A549 (cell line): ENCODE measurements at regions of chr10 and their contacts with region 1.

Region 1: DNA sequence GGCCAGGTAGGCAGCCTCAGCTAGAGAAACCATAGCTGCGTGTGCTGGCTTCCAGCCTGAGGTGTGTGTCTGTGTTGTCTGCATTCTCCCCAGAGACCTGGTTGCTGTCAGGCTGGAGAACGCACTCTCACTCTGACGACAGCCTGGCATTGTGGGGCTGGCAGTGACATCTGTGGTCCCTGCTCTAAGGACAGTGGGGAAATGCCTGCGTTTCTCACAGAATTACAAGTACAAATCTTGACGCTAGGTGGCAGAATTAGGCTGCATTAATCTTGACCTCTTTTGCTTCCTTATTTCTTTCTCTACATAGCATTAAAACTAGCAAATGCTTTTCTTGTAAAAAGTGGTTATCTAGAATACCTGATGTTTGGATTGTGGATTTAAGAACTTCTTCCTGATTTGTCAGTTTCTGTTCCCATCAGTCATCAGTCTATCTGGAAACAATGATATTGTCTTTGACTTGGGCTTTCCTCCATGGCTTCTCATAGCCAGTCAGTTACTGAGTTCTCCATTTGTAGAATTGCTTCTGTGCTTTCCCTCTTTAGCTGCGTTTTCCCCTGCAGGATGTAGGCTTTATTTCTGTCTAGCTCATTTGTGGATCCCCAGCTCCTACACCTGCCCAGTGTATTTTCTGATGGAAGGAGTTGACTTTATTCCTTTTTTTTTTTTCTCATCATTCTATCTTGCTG is 86.0 kb downstream of the FANK1 start:
- DNase-seq: peak; percentile 35 to 69
- ATAC-seq: peak; percentile 78 to 87; a peak in 5 of 6 replicates
- H3K4me3 ChIP-seq: no peak overlapping the region
- H3K27ac ChIP-seq: peak overlapping the region; percentile 23 to 67; a peak in 4 of 6 replicates
- H3K4me1 ChIP-seq: peaks cover 27% of the 10 kb centered on the region; the same call in 2 of the 3 replicates
- CTCF ChIP-seq: peak; percentile 82
- EP300 ChIP-seq: no peak
- POLR2A ChIP-seq: no peak
- RAD21 ChIP-seq: peak; percentile 87 to 94

Region 2: DNA sequence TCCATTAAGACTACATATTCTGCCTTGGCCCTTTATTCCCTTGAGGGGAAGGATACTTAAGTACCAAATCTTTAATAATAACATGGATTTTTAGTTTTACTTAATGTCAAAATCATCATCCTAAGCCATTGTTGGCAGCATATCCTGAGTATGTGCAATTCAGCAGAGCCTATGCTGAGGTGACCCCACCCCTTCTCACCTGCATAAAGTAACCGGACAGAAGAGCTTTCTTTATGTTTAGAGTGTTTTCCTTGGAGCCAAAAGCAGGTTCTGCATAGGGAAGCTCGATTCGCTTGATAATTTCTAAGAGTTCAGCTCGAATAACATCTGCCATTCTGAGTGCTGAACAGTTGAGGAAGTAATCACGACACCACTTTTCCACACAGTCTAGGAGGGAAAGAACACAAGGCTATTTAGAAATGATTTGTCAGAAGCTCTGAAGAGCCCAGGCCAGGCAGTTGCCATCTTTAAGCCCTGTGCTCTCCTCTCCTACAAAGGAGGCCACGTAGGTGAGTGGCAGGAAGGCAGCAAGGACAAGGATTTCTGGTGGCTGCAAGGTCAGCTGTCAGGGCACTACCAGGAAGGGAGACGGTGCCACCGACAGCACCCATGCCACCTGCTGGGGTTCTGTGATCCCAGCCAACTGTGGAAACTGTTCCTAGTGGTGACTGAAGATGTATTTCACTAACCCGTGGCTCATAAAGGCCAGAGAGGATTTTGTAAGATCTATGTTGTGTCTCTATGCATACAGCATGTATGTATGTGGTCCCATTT is 143.4 kb before region 1 on chr10:
- CTCF ChIA-PET with region 1: no interaction called
- POLR2A ChIA-PET with region 1: no interaction called
- DNase-seq: no peak
- ATAC-seq: no peak; a peak in 2 of 6 replicates
- H3K4me3 ChIP-seq: no peak overlapping the region
- H3K27ac ChIP-seq: no peak overlapping the region
- H3K4me1 ChIP-seq: peaks cover 20% of the 10 kb centered on the region
- CTCF ChIP-seq: no peak
- EP300 ChIP-seq: no peak
- POLR2A ChIP-seq: no peak
- RAD21 ChIP-seq: no peak

Region 3: DNA sequence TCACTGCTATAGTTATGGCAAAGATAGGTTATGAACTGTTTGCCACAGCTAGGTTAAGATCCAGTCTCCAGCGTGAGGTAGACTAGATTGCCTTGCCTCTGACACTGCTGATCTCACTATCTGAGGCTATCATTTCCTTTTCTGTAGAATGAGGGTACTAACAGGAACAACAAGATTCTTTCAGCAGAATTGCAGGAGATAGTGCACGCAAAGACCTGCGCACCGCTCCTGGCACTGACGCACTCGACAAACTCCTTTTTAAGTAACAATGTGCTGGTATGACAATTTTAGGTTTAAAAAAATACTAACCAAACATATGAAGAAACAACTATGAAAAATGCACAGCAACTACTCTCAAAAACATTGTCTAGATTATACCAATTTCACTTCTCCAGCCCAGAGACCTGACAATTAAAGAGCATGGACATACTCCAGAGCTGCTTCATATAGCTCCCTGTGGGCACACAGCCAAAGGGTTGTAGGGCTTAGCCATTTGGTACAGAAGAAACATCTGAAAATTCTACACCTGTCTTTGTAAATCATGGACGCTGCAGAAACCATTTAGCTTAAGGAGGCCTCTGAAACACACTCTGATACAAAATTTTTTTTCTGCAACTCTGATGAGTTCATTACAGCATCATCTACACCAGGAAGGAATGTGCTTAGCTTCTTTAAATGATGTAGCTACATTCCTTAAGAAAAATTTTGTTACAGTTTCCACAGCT is 398.1 kb after region 1 on chr10:
- CTCF ChIA-PET with region 1: interaction called, 11 read pairs
- POLR2A ChIA-PET with region 1: no interaction called
- DNase-seq: no peak
- ATAC-seq: no peak
- H3K4me3 ChIP-seq: no peak overlapping the region
- H3K27ac ChIP-seq: no peak overlapping the region
- H3K4me1 ChIP-seq: no peaks in the 10 kb centered on the region
- CTCF ChIP-seq: no peak
- EP300 ChIP-seq: no peak
- POLR2A ChIP-seq: no peak
- RAD21 ChIP-seq: no peak

Region 4: GRCh38 chr10:126387023-126387921 is 404.9 kb after region 1 on chr10:
- CTCF ChIA-PET with region 1: interaction called, 41 read pairs
- POLR2A ChIA-PET with region 1: no interaction called
- DNase-seq: peak; percentile 66 to 70
- ATAC-seq: peak; percentile 85 to 90
- H3K4me3 ChIP-seq: peak overlapping the region; percentile 61
- H3K27ac ChIP-seq: peak overlapping the region; percentile 63 to 93
- H3K4me1 ChIP-seq: no peaks in the 10 kb centered on the region
- CTCF ChIP-seq: peak; percentile 70
- EP300 ChIP-seq: no peak
- POLR2A ChIP-seq: no peak
- RAD21 ChIP-seq: peak; percentile 84 to 94

Region 5: DNA sequence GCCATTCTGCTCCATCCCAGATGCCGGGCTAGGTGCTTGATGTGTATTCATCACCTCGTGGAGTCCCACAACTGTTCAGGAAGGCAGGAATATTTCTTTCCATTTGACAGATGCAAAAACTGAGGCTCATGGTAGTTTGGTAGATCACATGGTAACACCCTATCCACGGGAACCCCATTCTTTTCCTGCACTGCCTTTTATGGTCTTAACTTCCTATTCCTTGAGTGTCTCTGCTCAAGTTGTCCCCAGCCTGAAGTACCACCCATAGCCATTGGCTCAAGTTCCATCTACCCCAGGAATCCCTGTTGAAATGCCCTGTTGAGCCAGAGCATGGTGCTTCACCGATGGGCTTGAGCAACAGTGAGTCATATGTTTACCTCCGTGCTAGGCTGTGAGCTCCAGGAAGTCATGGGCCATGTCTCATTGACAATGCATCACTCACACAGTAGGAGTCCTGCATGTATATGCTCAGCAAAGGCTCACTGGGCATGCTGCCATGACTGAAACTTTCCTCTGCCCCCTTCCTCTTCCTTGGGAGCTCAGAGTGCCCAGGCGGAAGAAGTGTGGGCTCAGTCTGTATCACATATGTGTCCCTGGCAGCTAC is 477.6 kb after region 1 on chr10:
- CTCF ChIA-PET with region 1: interaction called, 14 read pairs
- POLR2A ChIA-PET with region 1: no interaction called
- DNase-seq: peak; percentile 90 to 96
- ATAC-seq: peak; percentile 94 to 96
- H3K4me3 ChIP-seq: no peak overlapping the region
- H3K27ac ChIP-seq: peak overlapping the region; percentile 88 to 91
- H3K4me1 ChIP-seq: peaks cover 36% of the 10 kb centered on the region
- CTCF ChIP-seq: no peak
- EP300 ChIP-seq: peak; percentile 54 to 87; a peak in 3 of 5 replicates
- POLR2A ChIP-seq: no peak
- RAD21 ChIP-seq: peak; percentile 33 to 42; a peak in 3 of 5 replicates